B cell (primary cell): ENCODE measurements at regions of chr3 and their contacts with region 1.

Region 1: GRCh38 chr3:141386611-141387111 is 18.4 kb downstream of the ZBTB38 start:
- DNase-seq: peak; percentile 38
- ATAC-seq: peak; percentile 56
- H3K4me3 ChIP-seq: peak overlapping the region in 4 of 5 experiments; percentile 30 to 55 (median 32)
- H3K4me3 Mint-ChIP-seq: peak overlapping the region; percentile 87
- H3K27ac ChIP-seq: peak overlapping the region in 1 of 2 donors; percentile 43
- H3K27ac Mint-ChIP-seq: peak overlapping the region; percentile 91
- H3K4me1 ChIP-seq: no peaks in the 10 kb centered on the region
- H3K4me1 Mint-ChIP-seq: peaks cover 42% of the 10 kb centered on the region
- H3K27me3 ChIP-seq: peaks cover 0 to 3% (median 0%) of the 10 kb centered on the region in 4 experiments
- H3K27me3 Mint-ChIP-seq: no peaks in the 10 kb centered on the region
- CTCF ChIP-seq: no peak

Region 2: GRCh38 chr3:141370065-141370533 is 16.6 kb before region 1 on chr3:
- CTCF ChIA-PET with region 1: interaction called, 19 read pairs
- POLR2A ChIA-PET with region 1: interaction called, 3 read pairs
- intact Hi-C with region 1: no loop called
- DNase-seq: peak; percentile 91
- ATAC-seq: peak; percentile 98
- H3K4me3 ChIP-seq: no peak overlapping the region
- H3K4me3 Mint-ChIP-seq: peak overlapping the region; percentile 5
- H3K27ac ChIP-seq: peak overlapping the region in 1 of 2 donors; percentile 42
- H3K27ac Mint-ChIP-seq: peak overlapping the region; percentile 62
- H3K4me1 ChIP-seq: peaks cover 4 to 8% of the 10 kb centered on the region in 2 donors
- H3K4me1 Mint-ChIP-seq: peaks cover 20% of the 10 kb centered on the region
- H3K27me3 ChIP-seq: no peaks in the 10 kb centered on the region
- H3K27me3 Mint-ChIP-seq: no peaks in the 10 kb centered on the region
- CTCF ChIP-seq: peak; percentile 69

Region 3: DNA sequence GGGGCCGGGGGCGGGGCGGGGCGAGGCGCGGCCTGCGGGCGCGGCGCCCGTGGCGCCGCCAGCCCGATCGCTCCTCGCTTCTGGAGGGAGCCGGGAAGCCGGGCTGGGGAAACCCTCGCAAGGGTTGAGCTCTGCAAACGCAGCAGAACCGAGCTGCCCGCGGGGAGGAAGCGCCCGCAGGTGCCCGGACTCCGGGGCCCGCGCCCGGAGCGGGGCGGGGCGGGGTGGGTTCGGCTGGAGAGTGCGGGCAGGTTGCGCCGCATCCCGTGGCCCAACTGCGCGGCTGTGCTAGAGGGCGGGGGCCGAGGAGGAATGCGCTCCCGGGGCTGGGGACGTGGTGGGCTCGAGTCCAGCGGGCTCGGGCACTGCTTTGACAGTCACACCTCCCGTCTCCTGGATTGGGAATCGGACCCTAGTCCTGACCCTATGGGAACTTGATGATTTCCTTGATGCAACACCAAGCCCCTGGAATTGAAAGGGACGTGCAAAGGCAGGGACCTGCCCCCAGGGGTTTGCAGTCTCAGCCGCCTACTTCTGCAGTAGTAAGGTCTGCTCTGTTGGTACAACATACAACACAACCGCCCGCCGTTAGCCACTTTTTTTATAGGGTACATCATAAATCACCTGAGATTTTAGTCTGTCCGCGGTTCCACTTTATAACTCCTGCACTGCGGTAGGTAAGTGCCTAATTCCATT is 16.0 kb after region 1 on chr3:
- CTCF ChIA-PET with region 1: interaction called, 6 read pairs
- POLR2A ChIA-PET with region 1: interaction called, 5 read pairs
- intact Hi-C with region 1: loop called (anchors 2 kb)
- DNase-seq: no peak
- ATAC-seq: peak; percentile 61
- H3K4me3 ChIP-seq: peak overlapping the region; percentile 37 to 83 (median 78)
- H3K4me3 Mint-ChIP-seq: peak overlapping the region; percentile 95
- H3K27ac ChIP-seq: peak overlapping the region; percentile 35 to 90
- H3K27ac Mint-ChIP-seq: peak overlapping the region; percentile 98
- H3K4me1 ChIP-seq: peaks cover 8 to 14% of the 10 kb centered on the region in 2 donors
- H3K4me1 Mint-ChIP-seq: peaks cover 48% of the 10 kb centered on the region
- H3K27me3 ChIP-seq: no peaks in the 10 kb centered on the region
- H3K27me3 Mint-ChIP-seq: no peaks in the 10 kb centered on the region
- CTCF ChIP-seq: no peak

Region 4: GRCh38 chr3:141686466-141687291 is 300.0 kb after region 1 on chr3:
- CTCF ChIA-PET with region 1: no interaction called
- POLR2A ChIA-PET with region 1: no interaction called
- intact Hi-C with region 1: no loop called
- DNase-seq: no peak
- ATAC-seq: no peak
- H3K4me3 ChIP-seq: peak overlapping the region in 4 of 5 experiments; percentile 32 to 50 (median 34)
- H3K4me3 Mint-ChIP-seq: peak overlapping the region; percentile 79
- H3K27ac ChIP-seq: no peak overlapping the region
- H3K27ac Mint-ChIP-seq: no peak overlapping the region
- H3K4me1 ChIP-seq: peaks cover 8 to 9% of the 10 kb centered on the region in 2 donors
- H3K4me1 Mint-ChIP-seq: peaks cover 23% of the 10 kb centered on the region
- H3K27me3 ChIP-seq: no peaks in the 10 kb centered on the region
- H3K27me3 Mint-ChIP-seq: no peaks in the 10 kb centered on the region
- CTCF ChIP-seq: no peak